ENCODE measurements at regions of chr12 and their contacts with region 1.

Region 1: DNA sequence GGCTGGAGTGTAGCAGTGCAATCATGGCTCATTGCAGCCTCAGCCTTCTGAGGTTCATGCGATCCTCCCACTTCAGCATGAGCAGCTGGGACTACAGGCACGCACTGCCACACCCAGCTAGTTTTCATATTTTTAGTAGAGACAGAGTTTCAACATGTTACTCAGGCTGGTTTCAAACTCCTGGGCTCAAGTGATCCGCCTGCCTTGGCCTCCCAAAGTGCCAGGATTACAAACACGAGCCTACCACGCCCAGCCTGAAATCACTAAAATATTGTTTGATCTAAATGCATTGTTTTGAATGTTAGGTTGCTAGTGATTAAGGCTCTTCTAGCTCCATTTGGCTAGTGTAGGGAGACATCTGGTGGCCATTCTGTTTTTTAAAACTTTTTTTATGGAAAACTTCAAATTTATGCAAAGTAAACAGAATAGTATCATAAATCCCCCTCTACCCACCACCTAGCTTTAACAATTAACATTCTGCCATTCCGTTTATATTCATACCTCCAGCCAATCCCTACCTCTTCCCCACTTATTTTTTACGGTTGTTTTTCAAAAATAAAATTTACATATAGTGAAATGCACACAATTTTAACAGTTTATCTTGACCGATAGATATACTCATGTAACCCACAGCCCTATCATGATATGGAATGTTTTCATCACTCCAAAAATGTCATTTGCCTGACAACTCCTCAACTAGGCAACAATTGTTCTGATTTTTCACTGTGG is 37.8 kb downstream of the MYO1H start:
- DNase-seq: no peak
- H3K4me3 ChIP-seq: no peak overlapping the region
- H3K27ac ChIP-seq: no peak overlapping the region
- H3K4me1 ChIP-seq: no peaks in the 10 kb centered on the region
- H3K27me3 ChIP-seq: no peaks in the 10 kb centered on the region
- CTCF ChIP-seq: peak in 3 of 4 experiments; percentile 58 to 65 (median 59)
- POLR2A ChIP-seq: no peak

Region 2: DNA sequence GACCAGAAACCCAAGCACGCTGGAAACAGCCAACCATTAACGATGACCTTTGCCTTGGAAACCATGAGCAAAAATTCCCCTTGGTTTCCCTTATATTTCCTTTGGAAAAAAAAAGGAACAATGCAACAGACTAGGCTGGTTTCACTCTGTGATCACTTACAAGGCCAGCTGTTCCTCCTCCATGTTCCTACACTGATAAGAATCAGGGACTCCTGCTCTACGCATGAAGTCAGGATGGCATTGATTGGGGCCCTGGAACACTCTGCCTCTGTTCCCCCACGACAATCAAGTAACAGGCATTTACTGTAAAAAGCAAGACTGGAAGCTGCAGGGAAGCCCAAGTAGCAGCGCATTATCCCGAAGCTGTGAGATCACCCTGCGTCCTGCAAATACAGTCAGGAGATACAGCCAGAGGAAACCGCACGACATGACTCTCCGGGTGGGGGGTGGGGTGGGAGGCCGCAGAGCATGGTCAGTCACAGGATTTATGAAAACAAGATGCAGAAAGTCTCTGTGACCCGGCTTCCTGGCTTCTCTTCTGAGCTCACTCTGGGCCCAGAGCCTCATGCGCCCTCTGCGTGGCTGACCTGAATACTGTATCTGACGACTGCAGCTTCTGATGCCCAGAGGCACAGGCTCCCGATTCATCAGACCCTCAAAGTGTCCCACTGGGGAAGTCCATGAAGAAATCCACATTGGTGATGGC is 559.2 kb before region 1 on chr12:
- intact Hi-C with region 1: no loop called
- DNase-seq: no peak
- H3K4me3 ChIP-seq: no peak overlapping the region
- H3K27ac ChIP-seq: peak overlapping the region; percentile 35 to 43
- H3K4me1 ChIP-seq: peaks cover 3% of the 10 kb centered on the region
- H3K27me3 ChIP-seq: no peaks in the 10 kb centered on the region
- CTCF ChIP-seq: no peak
- POLR2A ChIP-seq: no peak

Region 3: GRCh38 chr12:109264943-109265650 is 120.4 kb before region 1 on chr12:
- intact Hi-C with region 1: loop called (anchors 5 kb)
- DNase-seq: no peak
- H3K4me3 ChIP-seq: no peak overlapping the region
- H3K27ac ChIP-seq: peak overlapping the region in 1 of 2 donors; percentile 54
- H3K4me1 ChIP-seq: no peaks in the 10 kb centered on the region
- H3K27me3 ChIP-seq: no peaks in the 10 kb centered on the region
- CTCF ChIP-seq: no peak
- POLR2A ChIP-seq: no peak

Region 4: GRCh38 chr12:109358154-109358869 is 27.2 kb before region 1 on chr12:
- intact Hi-C with region 1: no loop called
- DNase-seq: no peak
- H3K4me3 ChIP-seq: no peak overlapping the region
- H3K27ac ChIP-seq: no peak overlapping the region
- H3K4me1 ChIP-seq: no peaks in the 10 kb centered on the region
- H3K27me3 ChIP-seq: no peaks in the 10 kb centered on the region
- CTCF ChIP-seq: no peak
- POLR2A ChIP-seq: no peak

Region 5: DNA sequence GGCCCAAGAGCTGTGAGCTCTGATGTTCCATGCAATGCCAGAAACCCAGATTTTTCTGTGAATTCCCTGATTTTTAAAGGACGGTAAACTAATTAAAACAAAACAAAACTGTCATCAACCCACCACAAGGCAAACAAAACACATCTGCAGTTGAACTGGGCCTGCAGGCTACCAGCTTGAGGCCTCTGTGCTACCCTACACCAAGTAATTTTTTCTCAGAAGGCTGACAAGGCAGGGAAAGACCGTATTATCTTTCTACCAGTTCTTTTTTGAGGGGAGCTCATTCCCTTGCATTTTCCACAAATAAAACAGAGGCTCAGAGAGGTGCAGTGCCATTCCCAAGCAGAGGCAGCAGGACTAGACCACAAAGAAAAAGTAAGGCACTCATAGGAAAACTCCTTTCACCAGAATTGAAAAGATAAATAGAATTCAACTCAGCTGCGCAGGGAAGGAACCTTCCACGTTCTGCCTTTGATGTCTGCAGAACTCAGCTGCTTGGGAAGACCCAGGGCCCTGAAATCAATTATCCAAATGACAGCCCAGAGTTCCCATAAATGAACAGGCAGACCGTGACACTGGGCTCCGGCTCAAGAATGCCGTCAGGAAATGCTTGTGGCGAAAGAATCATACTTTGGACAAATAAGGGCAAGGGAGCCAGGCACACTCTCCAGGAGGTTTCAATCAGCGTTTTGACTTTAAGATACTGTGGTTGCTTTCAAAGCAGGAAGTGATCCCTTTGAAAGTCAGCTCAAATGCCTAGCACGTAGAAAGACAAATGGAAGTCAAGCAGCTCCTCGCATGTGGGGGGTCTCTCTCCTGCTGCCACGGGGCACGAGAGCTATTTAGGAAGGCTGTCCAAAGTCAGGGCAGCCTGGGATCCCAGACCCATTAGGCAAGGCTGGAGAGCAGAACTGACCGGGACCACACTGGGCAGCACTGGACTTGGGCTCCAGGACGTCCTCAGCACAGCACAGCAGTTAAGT is 77.5 kb after region 1 on chr12:
- intact Hi-C with region 1: no loop called
- DNase-seq: peak; percentile 86
- H3K4me3 ChIP-seq: peak overlapping the region in 1 of 2 donors; percentile 4
- H3K27ac ChIP-seq: peak overlapping the region; percentile 94
- H3K4me1 ChIP-seq: peaks cover 32% of the 10 kb centered on the region
- H3K27me3 ChIP-seq: no peaks in the 10 kb centered on the region
- CTCF ChIP-seq: no peak
- POLR2A ChIP-seq: no peak

Region 6: DNA sequence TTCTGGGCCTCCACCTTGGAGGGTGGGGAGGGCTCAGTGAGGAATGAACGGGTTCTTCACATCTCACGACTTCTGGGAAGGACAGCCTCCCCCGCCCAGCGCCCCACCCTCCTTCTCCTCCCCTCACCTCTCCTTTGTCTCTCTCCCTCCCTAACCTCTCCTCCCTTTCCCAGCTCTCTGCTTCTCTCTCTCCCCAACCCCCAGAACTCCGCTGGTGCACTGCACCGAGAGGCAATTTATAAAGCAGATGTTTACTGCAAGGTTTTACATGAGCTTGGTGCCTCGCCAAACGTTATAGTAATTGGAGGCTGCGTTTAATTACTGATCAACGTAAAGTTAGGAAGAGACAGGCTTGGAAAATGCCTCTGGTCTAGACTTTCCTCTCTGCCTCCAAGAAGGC is 285.2 kb after region 1 on chr12:
- intact Hi-C with region 1: no loop called
- DNase-seq: no peak
- H3K4me3 ChIP-seq: no peak overlapping the region
- H3K27ac ChIP-seq: no peak overlapping the region
- H3K4me1 ChIP-seq: no peaks in the 10 kb centered on the region
- H3K27me3 ChIP-seq: no peaks in the 10 kb centered on the region
- CTCF ChIP-seq: no peak
- POLR2A ChIP-seq: no peak